ENCODE measurements at regions of chr20 and their contacts with region 1.

Region 1: GRCh38 chr20:38304845-38305447 is 990 bp downstream of the BPI start:
- DNase-seq: peak in 5 of 10 donors; percentile 16 to 55 (median 50)
- H3K4me3 ChIP-seq: no peak overlapping the region
- H3K27ac ChIP-seq: no peak overlapping the region
- H3K27me3 ChIP-seq: no peaks in the 10 kb centered on the region
- CTCF ChIP-seq: peak in 52 of 56 donors; percentile 16 to 70 (median 48)

Region 2: GRCh38 chr20:38229376-38230252 is 75.3 kb before region 1 on chr20:
- intact Hi-C with region 1: loop called in 1 of 2 experiments (anchors 5 kb)
- DNase-seq: peak in 1 of 10 donors; percentile 28
- H3K4me3 ChIP-seq: no peak overlapping the region
- H3K27ac ChIP-seq: peak overlapping the region in 25 of 59 donors; percentile 1 to 82 (median 58)
- H3K27me3 ChIP-seq: no peaks in the 10 kb centered on the region
- CTCF ChIP-seq: peak in 55 of 56 donors; percentile 31 to 72 (median 53)